CD4-positive, alpha-beta T cell (primary cell): ENCODE measurements at regions of chr13 and their contacts with region 1.

Region 1: GRCh38 chr13:73782450-73783449 is 351.5 kb downstream of the KLF12 start:
- DNase-seq: no peak
- ATAC-seq: no peak
- H3K4me3 ChIP-seq: no peak overlapping the region
- H3K4me3 Mint-ChIP-seq: no peak overlapping the region
- H3K27ac ChIP-seq: no peak overlapping the region
- H3K27ac Mint-ChIP-seq: peak overlapping the region; percentile 10
- H3K4me1 ChIP-seq: no peaks in the 10 kb centered on the region
- H3K4me1 Mint-ChIP-seq: peaks cover 45% of the 10 kb centered on the region
- H3K27me3 ChIP-seq: no peaks in the 10 kb centered on the region
- H3K27me3 Mint-ChIP-seq: no peaks in the 10 kb centered on the region
- CTCF ChIP-seq: no peak

Region 2: DNA sequence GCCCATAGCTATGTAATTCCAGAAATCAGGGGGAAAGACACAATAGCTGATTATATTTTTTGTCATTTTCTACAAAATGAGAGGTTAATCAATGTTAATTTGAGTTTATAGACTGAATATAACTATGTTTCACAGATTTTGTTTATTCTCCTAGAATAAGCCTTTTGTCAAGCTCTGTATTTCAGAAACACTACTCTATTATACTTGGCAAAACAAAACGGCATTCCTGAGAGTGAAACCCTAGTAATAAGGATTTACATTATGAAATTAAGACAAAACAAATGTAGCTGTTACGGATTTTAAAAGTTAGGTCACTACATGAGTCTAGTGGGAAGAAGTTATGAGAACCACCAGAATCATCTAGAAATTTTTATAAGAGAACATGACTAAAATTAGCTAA is 17.3 kb after region 1 on chr13:
- CTCF ChIA-PET with region 1: interaction called, 4 read pairs
- POLR2A ChIA-PET with region 1: no interaction called
- intact Hi-C with region 1: loop called in 1 of 2 experiments (anchors 1 kb)
- DNase-seq: no peak
- ATAC-seq: no peak
- H3K4me3 ChIP-seq: no peak overlapping the region
- H3K4me3 Mint-ChIP-seq: no peak overlapping the region
- H3K27ac ChIP-seq: no peak overlapping the region
- H3K27ac Mint-ChIP-seq: no peak overlapping the region
- H3K4me1 ChIP-seq: no peaks in the 10 kb centered on the region
- H3K4me1 Mint-ChIP-seq: peaks cover 49% of the 10 kb centered on the region
- H3K27me3 ChIP-seq: no peaks in the 10 kb centered on the region
- H3K27me3 Mint-ChIP-seq: no peaks in the 10 kb centered on the region
- CTCF ChIP-seq: no peak

Region 3: DNA sequence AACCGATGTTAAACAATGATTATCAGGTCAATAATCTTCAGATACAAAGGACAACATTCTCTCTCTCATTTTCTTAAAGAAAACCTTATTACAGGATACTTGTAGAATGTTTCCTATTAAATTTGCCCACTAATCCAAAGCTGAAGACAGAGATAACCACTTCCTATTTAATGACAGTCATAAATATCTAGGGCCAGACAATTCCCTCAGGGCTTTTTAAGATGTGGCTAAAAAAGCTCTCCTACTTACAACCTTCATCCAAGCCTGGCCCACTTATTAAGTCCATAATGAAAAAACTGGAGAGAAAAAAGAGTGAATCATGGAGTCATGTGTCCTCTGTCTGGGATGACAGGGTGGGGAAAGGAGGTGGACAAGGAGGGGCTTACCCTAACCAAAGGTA is 115.5 kb after region 1 on chr13:
- CTCF ChIA-PET with region 1: no interaction called
- POLR2A ChIA-PET with region 1: no interaction called
- intact Hi-C with region 1: no loop called
- DNase-seq: no peak
- ATAC-seq: no peak
- H3K4me3 ChIP-seq: no peak overlapping the region
- H3K4me3 Mint-ChIP-seq: no peak overlapping the region
- H3K27ac ChIP-seq: no peak overlapping the region
- H3K27ac Mint-ChIP-seq: peak overlapping the region; percentile 2
- H3K4me1 ChIP-seq: peaks cover 3% of the 10 kb centered on the region
- H3K4me1 Mint-ChIP-seq: peaks cover 82% of the 10 kb centered on the region
- H3K27me3 ChIP-seq: no peaks in the 10 kb centered on the region
- H3K27me3 Mint-ChIP-seq: no peaks in the 10 kb centered on the region
- CTCF ChIP-seq: no peak

Region 4: GRCh38 chr13:74158028-74158427 is 375.3 kb after region 1 on chr13:
- CTCF ChIA-PET with region 1: no interaction called
- POLR2A ChIA-PET with region 1: no interaction called
- intact Hi-C with region 1: no loop called
- DNase-seq: no peak
- ATAC-seq: no peak
- H3K4me3 ChIP-seq: no peak overlapping the region
- H3K4me3 Mint-ChIP-seq: no peak overlapping the region
- H3K27ac ChIP-seq: no peak overlapping the region
- H3K27ac Mint-ChIP-seq: no peak overlapping the region
- H3K4me1 ChIP-seq: no peaks in the 10 kb centered on the region
- H3K4me1 Mint-ChIP-seq: no peaks in the 10 kb centered on the region
- H3K27me3 ChIP-seq: no peaks in the 10 kb centered on the region
- H3K27me3 Mint-ChIP-seq: no peaks in the 10 kb centered on the region
- CTCF ChIP-seq: no peak